Caco-2 (cell line): ENCODE measurements at regions of chrX and their contacts with region 1.

Region 1: DNA sequence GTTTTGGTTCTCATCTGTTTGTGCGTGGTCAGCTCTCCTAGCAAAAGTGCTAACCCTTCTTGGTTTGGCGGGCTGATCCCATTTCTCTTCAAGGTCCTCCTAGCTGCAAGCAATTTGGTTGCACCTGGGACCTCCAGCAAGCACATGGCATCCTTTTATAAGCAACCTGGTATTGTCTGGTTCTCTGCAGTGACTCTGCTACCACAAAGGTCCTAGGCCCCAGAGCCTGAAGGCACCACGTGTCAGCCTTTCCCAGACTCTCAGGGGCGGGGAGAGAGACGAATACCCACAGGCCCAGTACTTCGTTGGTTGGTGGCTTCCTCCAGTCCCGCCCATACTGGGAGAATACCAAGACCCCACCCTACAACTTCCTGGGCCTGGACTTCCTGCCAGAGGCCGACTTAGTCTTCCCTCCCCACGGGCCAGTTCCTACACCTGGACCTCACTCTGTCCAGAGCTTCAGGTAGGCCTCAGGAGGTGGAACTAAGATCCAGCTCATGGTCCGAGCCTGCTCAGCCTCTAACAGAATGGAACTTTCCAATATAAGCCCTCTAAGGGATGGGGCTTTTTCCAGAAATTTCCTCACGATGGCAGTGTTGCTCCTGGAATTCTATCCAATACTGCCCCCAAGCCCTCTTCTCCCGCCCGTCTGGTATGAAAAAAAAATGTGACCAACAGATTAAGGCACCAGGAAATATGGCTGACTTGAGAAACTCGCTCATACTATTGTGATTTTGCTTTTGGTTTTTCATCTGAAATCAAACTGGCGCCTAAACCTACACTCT is 192.5 kb upstream of the STK26 start:
- DNase-seq: peak; percentile 87 to 93
- H3K4me3 ChIP-seq: peak overlapping the region; percentile 42
- H3K4me3 Mint-ChIP-seq: peak overlapping the region; percentile 90
- H3K27ac Mint-ChIP-seq: peak overlapping the region; percentile 87
- H3K4me1 ChIP-seq: peaks cover 16% of the 10 kb centered on the region
- H3K4me1 Mint-ChIP-seq: peaks cover 9% of the 10 kb centered on the region
- H3K27me3 ChIP-seq: no peaks in the 10 kb centered on the region
- H3K27me3 Mint-ChIP-seq: no peaks in the 10 kb centered on the region
- CTCF ChIP-seq: peak; percentile 52 to 57

Region 2: GRCh38 chrX:131752489-131753198 is 77.9 kb before region 1 on chrX:
- CTCF ChIA-PET with region 1: no interaction called
- POLR2A ChIA-PET with region 1: no interaction called
- intact Hi-C with region 1: loop called (anchors 1 kb)
- DNase-seq: no peak
- H3K4me3 ChIP-seq: no peak overlapping the region
- H3K4me3 Mint-ChIP-seq: no peak overlapping the region
- H3K27ac Mint-ChIP-seq: no peak overlapping the region
- H3K4me1 ChIP-seq: no peaks in the 10 kb centered on the region
- H3K4me1 Mint-ChIP-seq: no peaks in the 10 kb centered on the region
- H3K27me3 ChIP-seq: no peaks in the 10 kb centered on the region
- H3K27me3 Mint-ChIP-seq: no peaks in the 10 kb centered on the region
- CTCF ChIP-seq: no peak

Region 3: DNA sequence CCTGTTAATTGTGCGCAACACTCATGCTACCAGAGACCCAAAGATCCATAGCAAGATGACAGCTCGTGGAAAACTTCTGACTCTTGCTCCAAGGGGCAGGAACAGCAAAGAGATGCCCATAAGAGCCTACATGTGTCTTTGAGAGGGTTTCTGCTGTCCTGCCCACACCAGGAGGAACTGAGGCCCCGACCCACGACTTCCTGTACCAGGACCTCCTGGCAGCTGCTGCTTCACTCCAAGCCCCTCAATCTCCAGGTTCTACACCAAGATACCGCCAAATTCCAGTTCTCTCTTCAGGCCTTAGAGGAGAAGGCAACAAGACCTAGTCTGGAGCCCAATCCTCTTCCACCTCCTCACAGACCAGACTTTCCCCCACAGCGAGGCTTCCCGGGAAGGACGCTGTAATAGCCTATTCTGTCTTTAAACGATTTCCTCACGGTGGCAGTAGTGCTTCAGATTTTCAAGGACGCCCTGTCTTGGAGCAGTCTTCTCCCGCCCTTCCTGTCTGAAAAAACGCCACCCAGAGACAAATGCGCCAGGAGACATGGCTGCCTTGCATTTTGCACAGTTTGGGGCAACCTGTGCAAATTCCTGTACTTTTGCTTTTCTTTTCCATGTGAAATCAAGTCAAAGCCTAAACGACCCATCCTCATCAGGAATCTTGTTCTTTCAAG is 37.7 kb before region 1 on chrX:
- CTCF ChIA-PET with region 1: no interaction called
- POLR2A ChIA-PET with region 1: no interaction called
- intact Hi-C with region 1: no loop called
- DNase-seq: no peak
- H3K4me3 ChIP-seq: no peak overlapping the region
- H3K4me3 Mint-ChIP-seq: no peak overlapping the region
- H3K27ac Mint-ChIP-seq: no peak overlapping the region
- H3K4me1 ChIP-seq: no peaks in the 10 kb centered on the region
- H3K4me1 Mint-ChIP-seq: no peaks in the 10 kb centered on the region
- H3K27me3 ChIP-seq: no peaks in the 10 kb centered on the region
- H3K27me3 Mint-ChIP-seq: no peaks in the 10 kb centered on the region
- CTCF ChIP-seq: no peak

Region 4: GRCh38 chrX:131841496-131842410 is 11.2 kb after region 1 on chrX:
- CTCF ChIA-PET with region 1: interaction called, 12 read pairs
- POLR2A ChIA-PET with region 1: no interaction called
- intact Hi-C with region 1: no loop called
- DNase-seq: peak; percentile 56 to 66
- H3K4me3 ChIP-seq: no peak overlapping the region
- H3K4me3 Mint-ChIP-seq: no peak overlapping the region
- H3K27ac Mint-ChIP-seq: no peak overlapping the region
- H3K4me1 ChIP-seq: 0 out of 2 replicates have a peak, but pooled peaks cover 4% of the 10 kb centered on the region
- H3K4me1 Mint-ChIP-seq: no peaks in the 10 kb centered on the region
- H3K27me3 ChIP-seq: no peaks in the 10 kb centered on the region
- H3K27me3 Mint-ChIP-seq: no peaks in the 10 kb centered on the region
- CTCF ChIP-seq: peak; percentile 59 to 70

Region 5: GRCh38 chrX:131861088-131861787 is 30.6 kb after region 1 on chrX:
- CTCF ChIA-PET with region 1: no interaction called
- POLR2A ChIA-PET with region 1: no interaction called
- intact Hi-C with region 1: no loop called
- DNase-seq: no peak
- H3K4me3 ChIP-seq: no peak overlapping the region
- H3K4me3 Mint-ChIP-seq: no peak overlapping the region
- H3K27ac Mint-ChIP-seq: no peak overlapping the region
- H3K4me1 ChIP-seq: no peaks in the 10 kb centered on the region
- H3K4me1 Mint-ChIP-seq: no peaks in the 10 kb centered on the region
- H3K27me3 ChIP-seq: no peaks in the 10 kb centered on the region
- H3K27me3 Mint-ChIP-seq: peaks cover 3% of the 10 kb centered on the region
- CTCF ChIP-seq: no peak

Region 6: GRCh38 chrX:131985489-131986049 is 155.0 kb after region 1 on chrX:
- CTCF ChIA-PET with region 1: no interaction called
- POLR2A ChIA-PET with region 1: no interaction called
- intact Hi-C with region 1: no loop called
- DNase-seq: peak; percentile 57 to 60
- H3K4me3 ChIP-seq: no peak overlapping the region
- H3K4me3 Mint-ChIP-seq: peak overlapping the region; percentile 24
- H3K27ac Mint-ChIP-seq: peak overlapping the region; percentile 79
- H3K4me1 ChIP-seq: peaks cover 6% of the 10 kb centered on the region
- H3K4me1 Mint-ChIP-seq: peaks cover 9% of the 10 kb centered on the region
- H3K27me3 ChIP-seq: no peaks in the 10 kb centered on the region
- H3K27me3 Mint-ChIP-seq: no peaks in the 10 kb centered on the region
- CTCF ChIP-seq: peak; percentile 23 to 27

Region 7: GRCh38 chrX:132022967-132023895 is 192.6 kb after region 1 on chrX and contains the start of gene STK26:
- CTCF ChIA-PET with region 1: no interaction called
- POLR2A ChIA-PET with region 1: no interaction called
- intact Hi-C with region 1: loop called (anchors 2 kb)
- DNase-seq: peak; percentile 79 to 86
- H3K4me3 ChIP-seq: peak within 1 kb of the TSS; percentile 79
- H3K4me3 Mint-ChIP-seq: peak within 1 kb of the TSS; percentile 88
- H3K27ac Mint-ChIP-seq: peak within 1 kb of the TSS; percentile 89
- H3K4me1 ChIP-seq: peaks cover 3% of the 10 kb centered on the region; the same call in 1 of the 2 replicates
- H3K4me1 Mint-ChIP-seq: peaks cover 13% of the 10 kb centered on the region
- H3K27me3 ChIP-seq: no peaks in the 10 kb centered on the region
- H3K27me3 Mint-ChIP-seq: no peaks in the 10 kb centered on the region
- CTCF ChIP-seq: no peak
- total RNA-seq, gene STK26: 36.8 and 37.1 TPM in 2 replicates

Region 8: GRCh38 chrX:132488819-132489577 is 658.4 kb after region 1 on chrX and contains the start of gene MBNL3:
- CTCF ChIA-PET with region 1: no interaction called
- POLR2A ChIA-PET with region 1: no interaction called
- intact Hi-C with region 1: loop called (anchors 10 kb)
- DNase-seq: peak; percentile 71
- H3K4me3 ChIP-seq: peak within 1 kb of the TSS; percentile 74
- H3K4me3 Mint-ChIP-seq: peak within 1 kb of the TSS; percentile 88
- H3K27ac Mint-ChIP-seq: peak within 1 kb of the TSS; percentile 63
- H3K4me1 ChIP-seq: peaks cover 18% of the 10 kb centered on the region; the same call in 1 of the 2 replicates
- H3K4me1 Mint-ChIP-seq: no peaks in the 10 kb centered on the region
- H3K27me3 ChIP-seq: no peaks in the 10 kb centered on the region
- H3K27me3 Mint-ChIP-seq: no peaks in the 10 kb centered on the region
- CTCF ChIP-seq: no peak
- total RNA-seq, gene MBNL3: 174 and 195 TPM in 2 replicates